GM12878 (cell line): ENCODE measurements at regions of chr4 and their contacts with region 1.

Region 1: DNA sequence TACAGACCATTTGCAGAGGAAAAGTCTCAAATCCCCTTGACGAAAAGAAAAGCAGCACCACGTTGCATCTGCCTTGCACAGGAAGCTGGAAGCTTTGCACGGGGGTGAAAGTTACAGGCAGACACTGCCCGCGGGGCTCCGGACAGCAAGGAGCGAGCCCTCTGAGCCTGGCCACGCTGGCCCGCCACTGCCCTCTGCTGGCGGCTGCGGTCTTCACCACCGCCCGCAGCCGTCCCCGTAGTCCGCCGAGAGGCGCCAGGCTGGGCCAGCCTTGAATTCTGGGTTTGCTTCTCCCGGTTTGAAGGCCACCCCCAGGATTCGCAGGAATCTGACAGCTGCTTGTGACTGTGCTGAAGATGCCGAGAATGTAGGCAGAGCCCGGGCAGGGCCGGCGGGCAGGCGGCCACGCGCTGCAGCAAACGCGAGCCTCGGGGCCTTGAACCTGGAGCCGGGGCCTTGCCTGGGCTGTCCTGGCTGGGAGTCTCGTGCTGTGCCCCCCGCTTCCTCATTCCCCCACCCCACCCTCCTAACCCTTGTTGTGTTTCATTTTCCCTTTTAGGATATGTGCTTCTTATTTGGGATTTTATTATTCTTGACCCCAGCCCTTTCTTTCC is 49.2 kb downstream of the ENPP6 start:
- DNase-seq: no peak
- ATAC-seq: peak; percentile 99
- H3K4me3 ChIP-seq: no peak overlapping the region
- H3K27ac ChIP-seq: no peak overlapping the region
- H3K4me1 ChIP-seq: no peaks in the 10 kb centered on the region
- H3K27me3 ChIP-seq: no peaks in the 10 kb centered on the region; a peak in 3 of 4 replicates
- CTCF ChIP-seq: peak; percentile 84 to 99 (median 91)
- EP300 ChIP-seq: no peak
- POLR2A ChIP-seq: no peak
- RAD21 ChIP-seq: peak; percentile 66

Region 2: GRCh38 chr4:183621875-183622274 is 546.6 kb before region 1 on chr4:
- CTCF ChIA-PET with region 1: no interaction called
- POLR2A ChIA-PET with region 1: no interaction called
- RAD21 ChIA-PET with region 1: no interaction called
- SMC1A ChIA-PET with region 1: no interaction called
- in situ Hi-C with region 1: no loop called
- intact Hi-C with region 1: loop called (anchors 10 kb)
- DNase-seq: no peak
- ATAC-seq: no peak
- H3K4me3 ChIP-seq: no peak overlapping the region
- H3K27ac ChIP-seq: no peak overlapping the region
- H3K4me1 ChIP-seq: no peaks in the 10 kb centered on the region
- H3K27me3 ChIP-seq: peaks cover 0 to 2% of the 10 kb centered on the region in 2 experiments; a peak in 1 of 4 replicates
- CTCF ChIP-seq: no peak
- EP300 ChIP-seq: no peak
- POLR2A ChIP-seq: no peak
- RAD21 ChIP-seq: no peak

Region 3: DNA sequence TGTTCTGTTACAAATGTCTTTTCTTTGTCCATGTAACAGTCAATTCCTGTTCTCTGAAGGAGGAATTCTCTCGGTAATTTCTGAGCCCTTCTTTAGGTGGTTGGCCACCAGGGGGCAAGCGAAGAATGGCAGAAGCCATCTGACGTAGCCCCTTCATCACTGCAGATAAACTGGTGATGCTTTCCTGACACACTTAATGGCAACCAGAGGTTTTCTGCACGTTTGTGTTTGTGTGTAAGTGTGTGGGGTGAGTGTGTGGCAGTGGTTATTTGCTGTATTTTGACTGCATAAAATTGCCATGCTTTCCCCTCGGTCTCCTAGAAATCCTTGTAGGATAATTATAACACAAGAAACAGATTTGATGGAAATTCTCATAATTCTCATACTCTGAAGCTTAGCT is 328.2 kb before region 1 on chr4:
- CTCF ChIA-PET with region 1: interaction called, 9 read pairs
- POLR2A ChIA-PET with region 1: no interaction called
- RAD21 ChIA-PET with region 1: no interaction called
- SMC1A ChIA-PET with region 1: interaction called, 3 read pairs
- in situ Hi-C with region 1: no loop called
- intact Hi-C with region 1: loop called (anchors 1 kb)
- DNase-seq: peak; percentile 5
- ATAC-seq: peak; percentile 92
- H3K4me3 ChIP-seq: no peak overlapping the region
- H3K27ac ChIP-seq: no peak overlapping the region
- H3K4me1 ChIP-seq: no peaks in the 10 kb centered on the region
- H3K27me3 ChIP-seq: no peaks in the 10 kb centered on the region
- CTCF ChIP-seq: peak; percentile 81 to 89 (median 88)
- EP300 ChIP-seq: no peak
- POLR2A ChIP-seq: no peak
- RAD21 ChIP-seq: peak; percentile 93

Region 4: GRCh38 chr4:184016759-184017668 is 151.5 kb before region 1 on chr4:
- CTCF ChIA-PET with region 1: no interaction called
- POLR2A ChIA-PET with region 1: no interaction called
- RAD21 ChIA-PET with region 1: no interaction called
- SMC1A ChIA-PET with region 1: no interaction called
- in situ Hi-C with region 1: no loop called
- intact Hi-C with region 1: no loop called
- DNase-seq: no peak
- ATAC-seq: no peak
- H3K4me3 ChIP-seq: no peak overlapping the region
- H3K27ac ChIP-seq: no peak overlapping the region
- H3K4me1 ChIP-seq: no peaks in the 10 kb centered on the region
- H3K27me3 ChIP-seq: no peaks in the 10 kb centered on the region
- CTCF ChIP-seq: no peak
- EP300 ChIP-seq: no peak
- POLR2A ChIP-seq: no peak
- RAD21 ChIP-seq: no peak

Region 5: DNA sequence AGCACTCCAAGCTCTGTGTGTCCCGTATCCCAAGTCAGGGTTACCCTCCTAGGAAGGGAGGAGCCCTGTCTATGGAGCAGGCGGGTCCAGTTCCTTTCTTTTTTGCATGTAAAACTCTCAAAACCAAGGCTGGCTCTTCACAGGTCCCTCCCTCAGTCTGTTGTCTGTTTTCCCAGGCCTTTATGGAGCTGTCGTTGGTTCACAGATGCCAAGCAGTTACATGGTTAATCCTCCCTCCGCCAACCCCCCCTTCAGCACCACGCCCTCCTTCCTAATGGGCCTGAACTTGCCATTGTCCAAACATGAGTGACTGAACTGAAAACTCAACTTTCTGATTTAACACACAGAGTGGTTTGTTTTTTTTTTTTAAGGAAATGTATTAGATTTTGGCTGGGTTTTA is 115.1 kb before region 1 on chr4:
- CTCF ChIA-PET with region 1: no interaction called
- POLR2A ChIA-PET with region 1: no interaction called
- RAD21 ChIA-PET with region 1: no interaction called
- SMC1A ChIA-PET with region 1: no interaction called
- in situ Hi-C with region 1: no loop called
- intact Hi-C with region 1: no loop called
- DNase-seq: no peak
- ATAC-seq: no peak
- H3K4me3 ChIP-seq: no peak overlapping the region
- H3K27ac ChIP-seq: no peak overlapping the region
- H3K4me1 ChIP-seq: no peaks in the 10 kb centered on the region
- H3K27me3 ChIP-seq: peaks cover 0 to 2% of the 10 kb centered on the region in 2 experiments; a peak in 2 of 4 replicates
- CTCF ChIP-seq: no peak
- EP300 ChIP-seq: no peak
- POLR2A ChIP-seq: no peak
- RAD21 ChIP-seq: no peak

Region 6: GRCh38 chr4:184156163-184156920 is 12.2 kb before region 1 on chr4:
- CTCF ChIA-PET with region 1: interaction called, 5 read pairs
- POLR2A ChIA-PET with region 1: no interaction called
- RAD21 ChIA-PET with region 1: no interaction called
- SMC1A ChIA-PET with region 1: interaction called, 10 read pairs
- in situ Hi-C with region 1: no loop called
- intact Hi-C with region 1: no loop called
- DNase-seq: no peak
- ATAC-seq: no peak
- H3K4me3 ChIP-seq: no peak overlapping the region
- H3K27ac ChIP-seq: no peak overlapping the region
- H3K4me1 ChIP-seq: no peaks in the 10 kb centered on the region
- H3K27me3 ChIP-seq: 0 out of 4 replicates have a peak, but pooled peaks cover 0 to 2% of the 10 kb centered on the region in 2 experiments
- CTCF ChIP-seq: no peak
- EP300 ChIP-seq: no peak
- POLR2A ChIP-seq: no peak
- RAD21 ChIP-seq: no peak

Region 7: GRCh38 chr4:184448821-184449220 is 280.3 kb after region 1 on chr4:
- CTCF ChIA-PET with region 1: no interaction called
- POLR2A ChIA-PET with region 1: no interaction called
- RAD21 ChIA-PET with region 1: no interaction called
- SMC1A ChIA-PET with region 1: no interaction called
- in situ Hi-C with region 1: no loop called
- intact Hi-C with region 1: no loop called
- DNase-seq: no peak
- ATAC-seq: peak; percentile 59
- H3K4me3 ChIP-seq: 0 out of 2 replicates have a peak overlapping the region, but pooled peaks have one; percentile 21
- H3K27ac ChIP-seq: peak overlapping the region; percentile 27
- H3K4me1 ChIP-seq: peaks cover 49% of the 10 kb centered on the region
- H3K27me3 ChIP-seq: no peaks in the 10 kb centered on the region
- CTCF ChIP-seq: no peak
- EP300 ChIP-seq: no peak
- POLR2A ChIP-seq: no peak
- RAD21 ChIP-seq: no peak